GM12878 (cell line): ENCODE measurements at regions of chr16 and their contacts with region 1.

Region 1: GRCh38 chr16:23149349-23149996 is at the start of gene USP31:
- DNase-seq: peak; percentile 78
- ATAC-seq: peak; percentile 99
- H3K4me3 ChIP-seq: peak within 1 kb of the TSS; percentile 79
- H3K27ac ChIP-seq: no peak within 1 kb of the TSS
- H3K4me1 ChIP-seq: no peaks in the 10 kb centered on the region; the same call in 1 of the 2 replicates
- H3K27me3 ChIP-seq: no peaks in the 10 kb centered on the region
- CTCF ChIP-seq: no peak
- EP300 ChIP-seq: no peak
- POLR2A ChIP-seq: peak; percentile 42; the same call in 1 of the 2 replicates
- RAD21 ChIP-seq: no peak
- polyA plus RNA-seq, gene USP31: 1.4 to 1.7 TPM

Region 2: DNA sequence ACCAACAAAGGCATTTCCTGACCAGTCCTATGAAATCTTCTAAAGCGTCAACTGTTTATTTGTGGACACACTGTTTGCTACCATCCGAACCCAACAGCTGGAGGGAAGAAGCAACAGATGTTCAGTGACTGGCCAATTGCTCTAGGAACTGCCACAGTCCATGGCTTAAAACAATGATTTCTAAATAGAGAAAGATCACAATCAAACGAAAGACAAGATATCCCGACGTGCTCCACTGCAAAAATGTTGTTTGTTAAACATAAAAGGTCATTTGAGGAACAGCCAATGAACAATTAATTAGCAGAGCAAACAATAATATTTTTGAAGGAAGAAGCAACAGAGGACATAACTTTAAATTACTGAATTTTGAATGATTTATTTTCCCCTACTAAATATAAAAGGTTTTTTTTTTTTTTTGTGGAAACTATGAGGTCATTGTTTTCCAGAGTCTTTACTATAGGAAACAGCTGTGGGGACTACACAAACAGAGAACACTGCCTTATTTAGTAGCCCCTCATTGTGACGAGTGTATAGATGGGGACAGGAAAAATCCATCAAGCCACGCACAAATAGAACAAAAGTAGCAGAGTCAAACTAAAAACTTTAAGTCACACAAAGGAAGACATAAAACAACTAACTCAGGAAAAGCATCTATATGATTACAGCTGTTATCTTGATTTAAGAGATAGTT is 17.4 kb before region 1 on chr16:
- CTCF ChIA-PET with region 1: no interaction called
- POLR2A ChIA-PET with region 1: no interaction called
- RAD21 ChIA-PET with region 1: no interaction called
- SMC1A ChIA-PET with region 1: interaction called, 13 read pairs
- in situ Hi-C with region 1: no loop called
- intact Hi-C with region 1: no loop called
- DNase-seq: no peak
- ATAC-seq: no peak
- H3K4me3 ChIP-seq: no peak overlapping the region
- H3K27ac ChIP-seq: no peak overlapping the region
- H3K4me1 ChIP-seq: no peaks in the 10 kb centered on the region
- H3K27me3 ChIP-seq: no peaks in the 10 kb centered on the region
- CTCF ChIP-seq: no peak
- EP300 ChIP-seq: no peak
- POLR2A ChIP-seq: no peak
- RAD21 ChIP-seq: no peak

Region 3: GRCh38 chr16:23207493-23207892 is 58.0 kb after region 1 on chr16:
- CTCF ChIA-PET with region 1: no interaction called
- POLR2A ChIA-PET with region 1: no interaction called
- RAD21 ChIA-PET with region 1: no interaction called
- SMC1A ChIA-PET with region 1: no interaction called
- in situ Hi-C with region 1: no loop called
- intact Hi-C with region 1: no loop called
- DNase-seq: no peak
- ATAC-seq: no peak
- H3K4me3 ChIP-seq: no peak overlapping the region
- H3K27ac ChIP-seq: no peak overlapping the region
- H3K4me1 ChIP-seq: no peaks in the 10 kb centered on the region
- H3K27me3 ChIP-seq: no peaks in the 10 kb centered on the region
- CTCF ChIP-seq: no peak
- EP300 ChIP-seq: no peak
- POLR2A ChIP-seq: no peak
- RAD21 ChIP-seq: no peak

Region 4: GRCh38 chr16:23858542-23858941 is 709.1 kb after region 1 on chr16:
- CTCF ChIA-PET with region 1: no interaction called
- POLR2A ChIA-PET with region 1: no interaction called
- RAD21 ChIA-PET with region 1: no interaction called
- SMC1A ChIA-PET with region 1: no interaction called
- in situ Hi-C with region 1: no loop called
- intact Hi-C with region 1: no loop called
- DNase-seq: no peak
- ATAC-seq: no peak
- H3K4me3 ChIP-seq: no peak overlapping the region
- H3K27ac ChIP-seq: peak overlapping the region; percentile 83
- H3K4me1 ChIP-seq: peaks cover 89% of the 10 kb centered on the region
- H3K27me3 ChIP-seq: no peaks in the 10 kb centered on the region
- CTCF ChIP-seq: no peak
- EP300 ChIP-seq: no peak
- POLR2A ChIP-seq: no peak
- RAD21 ChIP-seq: no peak